Astrocyte of the cerebellum (primary cell): ENCODE measurements at regions of chr11 and their contacts with region 1.

Region 1: DNA sequence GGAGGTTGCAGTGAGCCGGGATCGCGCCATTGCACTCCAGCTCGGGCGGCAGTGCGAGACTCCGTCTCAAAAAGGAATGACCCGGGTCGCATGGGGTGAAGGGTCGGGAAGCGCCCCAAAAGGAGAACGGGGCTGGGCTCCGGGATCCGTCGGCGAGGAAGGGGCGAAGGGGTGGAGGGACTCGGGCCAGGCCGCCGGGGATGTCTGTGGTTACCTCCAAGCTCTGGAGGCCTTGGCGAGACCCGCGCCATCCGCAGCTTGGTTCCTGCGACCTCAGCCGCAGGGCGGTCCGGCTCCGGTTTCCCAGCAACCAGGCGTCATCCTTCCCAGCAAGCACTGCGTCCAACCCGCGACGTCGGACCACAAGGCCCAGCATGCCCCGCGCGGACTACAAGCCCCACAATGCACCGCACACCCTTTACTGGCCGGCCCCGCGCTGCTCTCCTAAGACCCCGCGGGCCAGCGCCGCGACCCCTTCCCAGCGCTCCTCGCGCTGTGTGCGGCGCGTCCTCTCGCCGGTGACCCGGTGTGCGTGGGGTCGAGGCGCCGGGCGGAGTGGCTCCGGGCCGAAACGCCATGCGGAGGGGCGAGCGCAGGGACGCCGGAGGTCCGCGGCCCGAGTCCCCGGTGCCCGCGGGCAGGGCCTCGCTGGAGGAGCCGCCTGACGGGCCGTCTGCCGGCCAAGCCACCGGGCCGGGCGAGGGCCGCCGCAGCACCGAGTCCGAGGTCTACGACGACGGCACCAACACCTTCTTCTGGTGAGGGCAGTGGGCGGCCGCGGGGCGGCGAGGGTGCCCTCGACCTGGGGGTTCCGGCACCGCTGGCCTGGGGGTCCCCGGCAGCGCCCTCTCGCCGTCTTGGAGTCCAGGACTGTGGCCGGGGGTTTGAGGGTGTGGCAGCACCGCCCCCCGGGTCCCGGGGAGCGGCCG is at the start of gene PTDSS2:
- DNase-seq: peak; percentile 92
- H3K4me3 ChIP-seq: peak within 1 kb of the TSS; percentile 78
- CTCF ChIP-seq: no peak

Region 2: DNA sequence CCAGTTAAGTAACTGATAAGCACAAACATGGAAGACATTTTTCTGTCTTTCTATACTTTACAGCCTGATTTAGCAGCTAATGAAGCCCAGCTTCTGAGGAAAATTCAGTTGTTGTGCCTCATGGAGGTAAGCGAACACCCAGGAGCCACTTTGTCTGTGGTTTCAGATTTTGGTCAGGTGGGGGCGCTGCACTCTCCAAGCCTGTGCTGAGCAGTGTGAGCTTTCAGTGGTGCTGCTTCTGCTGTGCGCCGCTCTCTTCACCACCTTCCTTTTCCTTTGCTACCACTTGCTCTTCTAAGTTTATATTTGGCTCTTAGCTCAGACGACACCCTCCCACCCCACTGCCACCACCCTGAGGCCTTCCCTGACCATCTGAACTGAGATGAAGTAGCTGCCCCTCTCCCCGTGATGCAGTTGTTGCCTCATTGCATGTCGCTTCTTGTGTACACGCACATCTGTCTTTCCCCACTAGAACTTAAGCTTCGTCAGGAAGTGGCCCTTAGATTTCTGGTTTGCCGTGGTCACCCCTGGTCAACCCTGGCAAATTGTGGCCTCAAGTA is 199.3 kb before region 1 on chr11:
- in situ Hi-C with region 1: loop called (anchors 5 kb)
- DNase-seq: peak; percentile 18
- H3K4me3 ChIP-seq: no peak overlapping the region
- CTCF ChIP-seq: peak; percentile 59

Region 3: DNA sequence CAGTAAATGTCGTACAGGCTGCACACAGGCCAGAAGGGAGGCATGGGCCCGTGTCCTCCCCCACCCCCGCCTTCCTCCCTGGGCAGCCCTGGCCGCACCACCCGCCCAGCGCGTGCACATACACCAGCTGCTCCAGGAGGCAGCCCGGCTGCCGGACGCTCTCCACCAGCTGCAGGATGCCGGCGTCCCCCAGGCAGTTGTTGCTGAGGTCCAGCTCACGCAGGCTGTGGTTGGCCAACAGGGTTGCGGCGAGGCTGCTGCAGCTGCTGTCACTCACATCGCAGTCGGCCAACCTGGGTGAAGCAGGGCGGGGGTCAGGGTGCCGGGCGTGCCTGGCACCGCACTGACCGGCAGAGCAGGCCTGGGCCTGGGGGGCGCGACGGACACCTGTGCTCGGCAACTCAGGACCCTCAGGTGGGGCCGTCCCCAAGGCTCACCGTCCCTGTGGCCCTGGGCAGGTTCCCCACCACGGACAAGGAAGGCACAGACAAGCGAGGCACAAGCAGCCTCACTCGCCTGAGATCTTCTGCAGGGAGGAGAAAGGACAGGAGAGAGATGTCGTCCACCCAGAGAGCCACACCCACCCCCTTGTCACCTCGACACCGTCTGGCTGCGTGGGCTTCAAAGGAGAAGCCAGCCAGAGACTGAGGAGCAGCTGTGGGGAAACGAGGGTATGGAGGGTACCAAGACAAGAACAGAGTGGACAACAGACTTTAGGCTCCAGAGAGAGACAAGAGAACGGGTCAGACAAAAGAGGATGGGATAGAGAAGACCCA is 44.8 kb after region 1 on chr11:
- in situ Hi-C with region 1: no loop called
- DNase-seq: no peak
- H3K4me3 ChIP-seq: no peak overlapping the region
- CTCF ChIP-seq: no peak

Region 4: DNA sequence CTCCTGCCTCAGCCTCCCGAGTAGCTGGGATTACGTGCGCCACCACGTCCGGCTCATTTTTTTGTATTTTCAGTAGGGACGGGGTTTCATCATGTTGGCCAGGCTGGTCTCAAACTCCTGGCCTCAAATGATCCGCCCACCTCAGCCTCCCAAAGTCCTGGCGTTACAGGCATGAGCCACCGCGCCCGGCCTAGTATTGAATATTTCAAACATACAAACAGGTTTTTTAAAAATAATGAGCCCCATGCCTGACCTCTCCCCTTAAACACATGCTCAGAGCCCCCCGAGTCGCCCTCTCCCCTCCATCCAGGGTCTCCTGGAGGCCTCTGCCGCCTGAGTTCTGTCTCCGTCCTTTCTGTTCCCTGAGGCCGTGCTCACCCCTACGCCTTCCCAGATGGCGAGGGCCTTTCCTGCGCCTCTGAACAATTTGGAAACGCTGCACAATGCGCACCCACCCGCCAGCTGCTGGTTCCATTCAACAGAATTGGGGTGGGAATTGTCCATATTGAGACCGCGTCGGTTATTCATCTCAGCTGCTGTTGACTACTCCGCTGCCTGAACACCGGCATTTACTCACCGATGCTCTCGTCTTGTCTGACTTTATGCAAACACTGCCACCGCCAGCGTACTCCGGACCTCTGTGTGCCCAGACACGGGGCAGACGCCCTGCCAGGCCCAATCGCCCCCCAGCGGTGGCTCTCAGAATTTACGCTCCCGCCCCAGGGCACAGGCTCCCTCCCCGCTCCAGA is 70.5 kb after region 1 on chr11:
- in situ Hi-C with region 1: no loop called
- DNase-seq: no peak
- H3K4me3 ChIP-seq: no peak overlapping the region
- CTCF ChIP-seq: no peak

Region 5: DNA sequence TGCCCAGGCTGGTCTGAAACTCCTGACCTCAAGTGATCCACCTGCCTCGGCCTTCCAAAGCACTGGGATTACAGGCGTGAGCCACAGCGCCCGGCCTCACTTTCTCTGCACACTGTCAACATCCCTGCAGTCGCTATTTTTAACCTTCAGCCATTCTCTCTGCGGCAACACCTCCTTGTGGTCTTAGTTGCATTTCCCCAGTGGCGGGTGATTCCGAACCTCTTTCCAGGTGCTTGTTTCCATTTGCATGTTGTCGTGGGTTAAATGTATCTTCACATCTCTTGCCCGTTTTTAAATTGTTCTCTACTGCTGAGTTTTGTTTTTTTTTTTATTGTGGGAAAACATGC is 179.1 kb after region 1 on chr11:
- in situ Hi-C with region 1: no loop called
- DNase-seq: no peak
- H3K4me3 ChIP-seq: no peak overlapping the region
- CTCF ChIP-seq: peak; percentile 7